Gastrocnemius medialis (tissue), 4 donors: ENCODE measurements at regions of chrX and their contacts with region 1.

Region 1: DNA sequence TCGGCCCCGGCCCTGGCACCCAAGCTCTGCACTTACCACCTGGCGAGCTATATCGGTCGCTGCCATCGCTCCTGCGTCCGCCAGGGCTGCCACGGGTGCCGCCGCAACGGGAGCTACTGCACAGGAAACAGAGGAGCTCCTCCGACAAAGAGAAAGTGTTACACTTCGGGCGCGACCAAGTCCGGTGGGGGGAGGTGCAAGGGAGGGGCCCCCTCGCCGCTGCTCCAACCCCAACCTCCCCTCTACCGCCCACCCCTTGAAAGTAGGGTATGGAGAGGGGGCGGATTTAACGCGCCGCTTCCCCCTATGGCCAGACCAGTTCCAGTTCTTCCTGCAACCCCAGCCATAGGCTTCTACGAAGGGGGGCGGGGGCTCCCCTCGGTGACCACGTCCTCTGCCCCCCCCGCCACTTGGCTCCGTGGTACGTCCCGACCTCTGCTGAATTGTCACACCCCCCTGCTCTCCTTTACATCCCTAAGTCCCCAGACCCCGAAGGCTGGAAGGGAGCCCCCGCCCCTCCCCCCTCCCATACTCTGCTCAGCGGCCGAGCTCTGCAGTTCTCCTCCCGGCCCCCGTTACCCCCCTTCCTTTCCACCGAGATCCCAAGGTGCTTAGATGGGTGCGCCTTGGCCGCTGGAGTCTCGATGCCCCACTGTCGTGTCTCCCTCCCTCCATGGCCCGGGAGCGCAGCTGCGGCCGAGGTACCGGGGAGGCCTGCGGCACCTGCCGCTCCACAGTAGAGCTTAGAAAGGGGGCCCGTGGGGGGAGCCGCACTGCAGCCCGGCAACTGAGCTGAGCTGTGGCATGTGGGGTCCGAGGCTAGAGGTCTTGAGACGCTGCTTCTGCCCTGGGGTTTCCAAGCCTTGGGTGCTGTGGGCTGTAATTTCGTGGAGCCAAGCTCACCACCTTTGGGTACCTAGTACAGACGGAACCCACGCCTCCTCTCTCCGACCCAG is at the start of gene SEPTIN6:
- DNase-seq: peak in 1 of 2 donors; percentile 38
- ATAC-seq: peak; percentile 56 to 80
- H3K4me3 ChIP-seq: peak within 1 kb of the TSS; percentile 59 to 74 (median 65)
- H3K27ac ChIP-seq: peak within 1 kb of the TSS; percentile 50 to 62 (median 56)
- H3K4me1 ChIP-seq: no peaks in the 10 kb centered on the region
- H3K27me3 ChIP-seq: no peaks in the 10 kb centered on the region
- CTCF ChIP-seq: no peak
- POLR2A ChIP-seq: peak; percentile 19 to 38
- total RNA-seq, gene SEPTIN6: 1.2 to 11.1 (median 3.5) TPM

Region 2: GRCh38 chrX:119617517-119618164 is 75.7 kb before region 1 on chrX:
- in situ Hi-C with region 1: no loop called
- intact Hi-C with region 1: loop called (anchors 5 kb)
- DNase-seq: no peak
- ATAC-seq: no peak
- H3K4me3 ChIP-seq: no peak overlapping the region
- H3K27ac ChIP-seq: no peak overlapping the region
- H3K4me1 ChIP-seq: no peaks in the 10 kb centered on the region
- H3K27me3 ChIP-seq: no peaks in the 10 kb centered on the region
- CTCF ChIP-seq: no peak
- POLR2A ChIP-seq: no peak

Region 3: GRCh38 chrX:119726900-119727555 is 33.7 kb after region 1 on chrX:
- in situ Hi-C with region 1: no loop called
- intact Hi-C with region 1: no loop called
- DNase-seq: no peak
- ATAC-seq: no peak
- H3K4me3 ChIP-seq: no peak overlapping the region
- H3K27ac ChIP-seq: no peak overlapping the region
- H3K4me1 ChIP-seq: no peaks in the 10 kb centered on the region
- H3K27me3 ChIP-seq: no peaks in the 10 kb centered on the region
- CTCF ChIP-seq: no peak
- POLR2A ChIP-seq: no peak